Aorta (tissue), 5 donors: ENCODE measurements at regions of chr22 and their contacts with region 1.

Region 1: GRCh38 chr22:33920927-33921524 is 750 bp upstream of the LARGE1 start:
- DNase-seq: peak; percentile 99 to 100
- ATAC-seq: peak; percentile 96
- H3K4me3 ChIP-seq: peak overlapping the region; percentile 69 to 90
- H3K27ac ChIP-seq: peak overlapping the region; percentile 6 to 34
- H3K4me1 ChIP-seq: peaks cover 0 to 2% of the 10 kb centered on the region in 2 donors
- H3K27me3 ChIP-seq: no peaks in the 10 kb centered on the region

Region 2: DNA sequence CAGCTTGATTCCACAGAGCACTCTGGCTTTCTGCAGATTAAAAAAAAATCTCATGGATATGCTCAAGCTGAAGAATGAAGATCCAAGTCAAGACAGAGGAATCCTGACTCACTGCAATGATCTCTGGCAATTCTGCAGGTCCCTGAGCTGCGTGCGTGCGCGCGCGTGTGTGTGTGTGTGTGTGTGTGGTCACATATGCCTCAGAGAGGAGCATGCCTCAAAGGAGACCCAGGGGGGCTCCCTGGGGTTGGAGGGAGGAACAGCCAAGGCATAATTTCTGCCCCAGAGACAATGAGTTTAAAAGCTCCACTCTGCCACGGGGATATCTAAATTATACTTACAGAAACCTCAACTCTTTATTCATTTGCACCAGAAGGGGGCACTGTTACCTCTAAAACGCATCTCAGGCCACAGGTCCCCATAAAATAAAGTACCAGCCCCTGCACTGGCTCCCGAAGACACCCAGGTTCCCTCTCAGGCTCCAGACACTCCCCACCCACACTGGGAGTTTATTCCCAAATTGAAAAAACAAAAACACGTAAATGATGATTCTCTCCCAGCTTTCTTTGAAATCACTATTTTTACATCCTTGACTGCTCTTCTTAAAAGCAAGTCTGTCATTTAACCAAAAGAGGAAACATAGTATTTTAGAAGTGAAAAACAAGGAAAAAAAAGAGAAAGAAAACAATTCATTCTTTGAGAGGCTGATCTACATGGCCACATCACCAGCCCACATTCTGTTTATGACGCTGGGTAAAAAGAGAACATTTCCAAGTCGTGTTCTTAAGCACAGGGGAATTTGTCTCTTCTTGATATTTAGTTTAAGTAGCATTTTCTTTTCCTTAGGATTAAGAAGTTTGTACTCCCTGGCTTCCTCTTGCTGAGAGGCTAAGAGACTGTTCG is 401.7 kb before region 1 on chr22:
- intact Hi-C with region 1: loop called (anchors 10 kb)
- DNase-seq: no peak
- ATAC-seq: peak; percentile 59
- H3K4me3 ChIP-seq: no peak overlapping the region
- H3K27ac ChIP-seq: no peak overlapping the region
- H3K4me1 ChIP-seq: no peaks in the 10 kb centered on the region
- H3K27me3 ChIP-seq: no peaks in the 10 kb centered on the region

Region 3: DNA sequence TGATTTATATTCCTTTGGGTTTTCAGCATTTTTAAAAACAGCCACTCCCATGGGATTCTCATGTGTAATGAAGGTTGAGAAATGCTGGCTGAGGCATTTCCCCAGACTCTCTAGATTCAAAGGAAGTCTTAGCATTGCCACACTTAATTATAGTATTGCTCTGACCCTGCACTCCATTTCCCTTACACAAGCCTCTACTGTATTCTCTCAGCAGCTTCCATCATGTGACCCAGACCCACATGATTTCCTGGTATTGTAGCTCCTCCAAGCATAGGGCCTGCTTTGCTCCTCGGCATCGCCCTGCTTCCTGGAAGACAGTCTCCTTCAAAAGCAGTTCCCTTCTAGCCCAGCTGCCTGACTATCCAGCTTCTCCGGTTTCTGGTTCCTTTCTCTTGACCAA is 262.3 kb before region 1 on chr22:
- intact Hi-C with region 1: loop called in 1 of 2 experiments (anchors 5 kb)
- DNase-seq: peak in 1 of 2 donors; percentile 59
- ATAC-seq: peak; percentile 82
- H3K4me3 ChIP-seq: no peak overlapping the region
- H3K27ac ChIP-seq: no peak overlapping the region
- H3K4me1 ChIP-seq: peaks cover 1 to 5% of the 10 kb centered on the region in 2 donors
- H3K27me3 ChIP-seq: no peaks in the 10 kb centered on the region

Region 4: GRCh38 chr22:33853200-33854097 is 67.6 kb before region 1 on chr22:
- intact Hi-C with region 1: loop called in 1 of 2 experiments (anchors 5 kb)
- DNase-seq: peak; percentile 83 to 84
- ATAC-seq: peak; percentile 90
- H3K4me3 ChIP-seq: peak overlapping the region; percentile 62 to 98
- H3K27ac ChIP-seq: peak overlapping the region in 1 of 2 donors; percentile 59
- H3K4me1 ChIP-seq: no peaks in the 10 kb centered on the region
- H3K27me3 ChIP-seq: no peaks in the 10 kb centered on the region

Region 5: GRCh38 chr22:34105461-34106062 is 184.5 kb after region 1 on chr22:
- intact Hi-C with region 1: loop called (anchors 2 to 5 kb)
- DNase-seq: peak; percentile 55 to 76
- ATAC-seq: no peak
- H3K4me3 ChIP-seq: no peak overlapping the region
- H3K27ac ChIP-seq: no peak overlapping the region
- H3K4me1 ChIP-seq: no peaks in the 10 kb centered on the region
- H3K27me3 ChIP-seq: no peaks in the 10 kb centered on the region